ENCODE measurements at regions of chr7 and their contacts with region 1.

Region 1: GRCh38 chr7:2431260-2431867 is 28.0 kb downstream of the CHST12 start:
- DNase-seq: peak; percentile 53
- ATAC-seq: peak; percentile 87
- H3K4me3 Mint-ChIP-seq: no peak overlapping the region
- H3K27ac Mint-ChIP-seq: no peak overlapping the region
- H3K4me1 Mint-ChIP-seq: peaks cover 18% of the 10 kb centered on the region
- H3K27me3 Mint-ChIP-seq: no peaks in the 10 kb centered on the region
- CTCF ChIP-seq: peak; percentile 72

Region 2: DNA sequence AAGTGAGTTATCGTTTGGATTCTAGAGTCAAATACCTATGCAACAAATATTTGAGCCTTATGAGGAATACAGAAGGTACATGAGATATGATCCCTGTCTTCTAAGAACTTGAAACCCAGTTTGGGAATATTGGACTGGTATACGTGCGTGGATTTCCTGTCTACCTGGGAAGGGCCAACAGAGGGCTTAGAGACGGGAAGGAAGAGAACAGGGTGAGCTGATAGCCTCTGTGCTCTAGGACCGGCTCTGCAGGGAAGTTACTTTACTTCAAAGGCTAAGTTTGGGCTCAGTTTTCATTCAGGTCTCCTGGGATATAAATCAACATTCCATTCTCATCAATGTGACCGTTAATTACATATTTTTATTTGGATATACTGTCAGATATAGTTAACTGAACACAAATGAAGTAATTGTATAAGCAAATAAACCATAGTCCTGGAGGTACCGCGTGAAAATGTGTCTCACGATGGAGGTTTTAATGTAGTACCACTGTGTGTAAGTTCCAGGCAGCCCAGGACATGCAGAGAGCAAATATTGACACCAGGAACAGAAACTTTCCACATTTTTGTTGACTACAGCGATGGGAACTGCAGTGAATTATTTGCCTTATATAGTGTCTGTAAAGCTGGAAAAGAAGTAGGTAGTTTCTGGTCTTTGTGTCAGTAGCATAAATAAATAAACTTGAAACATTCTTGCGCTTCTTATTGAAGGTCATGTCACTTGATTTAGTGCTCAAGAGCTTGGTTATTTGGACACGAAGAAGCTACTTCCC is 19.4 kb before region 1 on chr7:
- CTCF ChIA-PET with region 1: interaction called, 31 read pairs
- POLR2A ChIA-PET with region 1: interaction called, 3 read pairs
- intact Hi-C with region 1: no loop called
- DNase-seq: no peak
- ATAC-seq: no peak
- H3K4me3 Mint-ChIP-seq: no peak overlapping the region
- H3K27ac Mint-ChIP-seq: no peak overlapping the region
- H3K4me1 Mint-ChIP-seq: peaks cover 57% of the 10 kb centered on the region
- H3K27me3 Mint-ChIP-seq: no peaks in the 10 kb centered on the region
- CTCF ChIP-seq: no peak

Region 3: GRCh38 chr7:2508327-2509215 is 77.2 kb after region 1 on chr7:
- CTCF ChIA-PET with region 1: no interaction called
- POLR2A ChIA-PET with region 1: no interaction called
- intact Hi-C with region 1: no loop called
- DNase-seq: peak; percentile 89
- ATAC-seq: peak; percentile 64
- H3K4me3 Mint-ChIP-seq: peak overlapping the region; percentile 68
- H3K27ac Mint-ChIP-seq: peak overlapping the region; percentile 84
- H3K4me1 Mint-ChIP-seq: peaks cover 57% of the 10 kb centered on the region
- H3K27me3 Mint-ChIP-seq: no peaks in the 10 kb centered on the region
- CTCF ChIP-seq: no peak